IMR-90 (cell line): ENCODE measurements at regions of chr14 and their contacts with region 1.

Region 1: GRCh38 chr14:77301103-77301502 is 19.6 kb downstream of the POMT2 start:
- DNase-seq: peak; percentile 85
- ATAC-seq: peak; percentile 81
- H3K4me3 ChIP-seq: no peak overlapping the region
- H3K27ac ChIP-seq: no peak overlapping the region
- H3K4me1 ChIP-seq: peaks cover 10% of the 10 kb centered on the region
- H3K27me3 ChIP-seq: no peaks in the 10 kb centered on the region
- CTCF ChIP-seq: peak; percentile 91
- POLR2A ChIP-seq: no peak
- RAD21 ChIP-seq: peak; percentile 86

Region 2: GRCh38 chr14:77314043-77314442 is 12.9 kb after region 1 on chr14:
- CTCF ChIA-PET with region 1: interaction called, 116 read pairs
- POLR2A ChIA-PET with region 1: interaction called, 4 read pairs
- dilution Hi-C with region 1: no loop called
- in situ Hi-C with region 1: no loop called
- intact Hi-C with region 1: loop called (anchors 1 kb)
- DNase-seq: peak; percentile 89
- ATAC-seq: peak; percentile 92
- H3K4me3 ChIP-seq: no peak overlapping the region
- H3K27ac ChIP-seq: peak overlapping the region; percentile 25
- H3K4me1 ChIP-seq: peaks cover 15% of the 10 kb centered on the region
- H3K27me3 ChIP-seq: no peaks in the 10 kb centered on the region
- CTCF ChIP-seq: no peak
- POLR2A ChIP-seq: no peak
- RAD21 ChIP-seq: 0 out of 2 replicates have a peak, but pooled peaks have one; percentile 6

Region 3: DNA sequence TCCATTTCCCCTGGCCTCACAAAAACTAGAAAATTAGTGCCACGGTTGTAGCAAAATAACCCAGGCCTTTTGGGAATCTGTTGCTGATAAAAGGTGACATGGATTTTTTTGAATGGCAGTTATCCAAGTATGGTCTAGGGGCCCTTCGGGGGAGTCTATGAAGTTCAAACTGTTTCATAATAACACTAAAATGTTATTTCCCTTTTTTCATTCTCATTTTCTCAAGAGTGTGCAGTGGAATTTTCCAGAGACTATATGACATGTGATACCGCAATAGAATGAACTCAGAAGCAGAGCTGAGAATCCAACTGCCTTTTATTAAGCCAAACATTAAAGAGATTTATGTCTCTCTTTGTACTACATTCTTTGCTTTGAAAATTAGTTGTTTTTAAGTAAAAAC is 46.6 kb after region 1 on chr14:
- CTCF ChIA-PET with region 1: no interaction called
- POLR2A ChIA-PET with region 1: no interaction called
- dilution Hi-C with region 1: no loop called
- in situ Hi-C with region 1: no loop called
- intact Hi-C with region 1: no loop called
- DNase-seq: no peak
- ATAC-seq: no peak
- H3K4me3 ChIP-seq: no peak overlapping the region
- H3K27ac ChIP-seq: no peak overlapping the region
- H3K4me1 ChIP-seq: peaks cover under 1% of the 10 kb centered on the region; the same call in 1 of the 2 replicates
- H3K27me3 ChIP-seq: no peaks in the 10 kb centered on the region
- CTCF ChIP-seq: no peak
- POLR2A ChIP-seq: no peak
- RAD21 ChIP-seq: no peak

Region 4: GRCh38 chr14:77554207-77554606 is 253.1 kb after region 1 on chr14:
- CTCF ChIA-PET with region 1: no interaction called
- POLR2A ChIA-PET with region 1: no interaction called
- dilution Hi-C with region 1: no loop called
- in situ Hi-C with region 1: loop called (anchors 10 kb)
- intact Hi-C with region 1: loop called (anchors 5 kb)
- DNase-seq: no peak
- ATAC-seq: no peak
- H3K4me3 ChIP-seq: no peak overlapping the region
- H3K27ac ChIP-seq: no peak overlapping the region
- H3K4me1 ChIP-seq: no peaks in the 10 kb centered on the region
- H3K27me3 ChIP-seq: no peaks in the 10 kb centered on the region
- CTCF ChIP-seq: no peak
- POLR2A ChIP-seq: no peak
- RAD21 ChIP-seq: no peak